Sciatic nerve (tissue), 2 donors: ENCODE measurements at regions of chr18 and their contacts with region 1.

Region 1: DNA sequence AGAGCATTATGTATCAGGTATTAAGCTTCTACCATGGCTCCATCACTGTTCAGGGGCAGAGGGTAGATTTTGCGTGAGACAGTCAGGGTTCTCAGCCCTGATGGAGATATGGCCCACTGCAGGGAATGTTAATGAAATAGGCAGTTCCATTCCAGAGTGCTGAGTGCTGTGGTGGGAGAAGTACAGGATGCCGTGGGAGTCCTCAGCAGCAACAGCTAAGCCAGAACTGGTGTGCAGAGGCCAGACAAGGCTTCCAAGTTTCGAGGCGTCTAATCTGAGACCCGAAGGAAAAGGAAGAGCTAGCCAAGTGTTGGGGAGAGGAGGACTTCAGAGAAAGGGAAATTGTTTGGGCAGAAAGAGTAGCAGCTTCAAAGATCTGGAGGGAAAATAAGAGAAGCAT is 30.2 kb upstream of the MAPRE2 start:
- DNase-seq: no peak
- ATAC-seq: no peak

Region 2: GRCh38 chr18:35132021-35132902 is 121.3 kb after region 1 on chr18:
- intact Hi-C with region 1: loop called (anchors 10 kb)
- DNase-seq: no peak
- ATAC-seq: peak; percentile 81